ENCODE measurements at regions of chr1 and their contacts with region 1.

Region 1: GRCh38 chr1:115275212-115275611 is 62.8 kb downstream of the NGF start:
- DNase-seq: no peak

Region 2: GRCh38 chr1:114716304-114717170 is 558.7 kb before region 1 on chr1 and contains the start of gene NRAS:
- intact Hi-C with region 1: loop called in 1 of 2 experiments (anchors 10 kb)
- DNase-seq: peak; percentile 99
- total RNA-seq, gene NRAS: 19.9 to 24.8 TPM

Region 3: GRCh38 chr1:115456441-115456961 is 181.3 kb after region 1 on chr1:
- intact Hi-C with region 1: loop called in 1 of 2 experiments (anchors 10 kb)
- DNase-seq: no peak

Region 4: DNA sequence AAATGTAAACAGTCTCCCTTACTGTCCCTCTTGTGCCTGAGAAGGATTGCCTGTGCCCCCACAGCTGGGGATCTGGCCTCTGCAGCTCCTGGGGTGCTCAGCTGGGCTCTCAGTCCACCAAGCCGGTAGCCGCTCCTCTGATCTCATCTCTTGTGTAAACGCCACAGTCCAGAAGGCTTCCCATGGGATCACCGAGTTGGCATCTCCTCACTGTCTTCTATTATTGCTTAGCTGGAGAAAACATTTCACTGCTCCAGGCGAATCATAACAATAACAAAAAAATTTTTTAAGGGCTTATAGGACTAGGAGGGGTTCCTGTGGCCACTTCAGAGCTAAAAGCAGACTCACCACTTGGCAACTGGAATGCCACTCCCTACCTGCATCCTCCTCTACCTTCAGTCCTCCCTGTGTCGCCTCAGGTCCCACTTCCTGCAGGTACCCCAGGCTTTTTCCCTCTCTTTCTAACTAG is 1173.6 kb after region 1 on chr1:
- intact Hi-C with region 1: no loop called
- DNase-seq: no peak

Measured in posterior vena cava (tissue), 2 donors.